Activated CD8-positive, alpha-beta memory T cell treated with anti-CD3 and anti-CD28 coated beads, Interleukin-2, amount 10 ng/mL, durations not matched to agents 7 days and 5 days (primary cell): ENCODE measurements at regions of chr6 and their contacts with region 1.

Region 1: GRCh38 chr6:4055420-4056041 is 23.4 kb downstream of the FAM217A start:
- DNase-seq: peak; percentile 46
- ATAC-seq: no peak
- H3K4me3 Mint-ChIP-seq: no peak overlapping the region
- H3K27ac Mint-ChIP-seq: peak overlapping the region; percentile 9
- H3K4me1 Mint-ChIP-seq: peaks cover 34% of the 10 kb centered on the region
- H3K27me3 Mint-ChIP-seq: no peaks in the 10 kb centered on the region

Region 2: GRCh38 chr6:3962957-3963303 is 92.6 kb before region 1 on chr6:
- CTCF ChIA-PET with region 1: no interaction called
- DNase-seq: no peak
- ATAC-seq: no peak
- H3K4me3 Mint-ChIP-seq: no peak overlapping the region
- H3K27ac Mint-ChIP-seq: no peak overlapping the region
- H3K4me1 Mint-ChIP-seq: peaks cover 5% of the 10 kb centered on the region
- H3K27me3 Mint-ChIP-seq: no peaks in the 10 kb centered on the region

Region 3: DNA sequence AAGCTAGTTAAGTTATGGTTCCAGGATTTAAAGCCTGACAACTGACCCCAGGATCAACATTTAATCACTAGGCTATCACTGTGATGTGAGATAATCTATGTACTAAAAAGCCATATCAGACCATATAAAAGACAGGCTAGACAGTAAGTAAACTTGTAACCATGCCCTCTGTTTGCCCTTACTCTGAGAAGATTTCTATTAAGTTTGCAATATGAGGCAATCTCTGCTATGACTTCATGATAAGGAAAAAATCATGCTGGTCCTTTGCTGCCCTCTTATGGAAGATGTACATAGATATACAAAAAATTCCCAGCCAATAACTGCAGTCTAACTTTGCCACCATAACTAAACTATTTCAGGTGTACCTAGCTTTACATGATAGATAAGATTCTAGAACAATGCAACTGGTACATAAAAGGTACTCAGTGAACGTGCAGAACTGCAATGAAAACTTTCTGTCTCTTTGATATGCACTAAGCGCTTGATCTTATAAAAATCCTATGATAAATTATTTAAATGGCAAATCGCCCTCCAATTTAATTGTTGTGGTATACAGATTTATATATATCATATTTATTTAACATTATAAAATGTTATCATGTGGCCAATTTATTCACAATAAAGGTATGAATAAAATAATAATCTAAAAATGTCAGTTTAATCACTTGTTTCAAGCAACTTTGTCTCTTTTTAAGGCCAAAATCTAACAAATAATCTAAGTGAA is 47.0 kb before region 1 on chr6:
- CTCF ChIA-PET with region 1: no interaction called
- DNase-seq: no peak
- ATAC-seq: peak; percentile 43
- H3K4me3 Mint-ChIP-seq: no peak overlapping the region
- H3K27ac Mint-ChIP-seq: no peak overlapping the region
- H3K4me1 Mint-ChIP-seq: peaks cover 43% of the 10 kb centered on the region
- H3K27me3 Mint-ChIP-seq: no peaks in the 10 kb centered on the region

Region 4: DNA sequence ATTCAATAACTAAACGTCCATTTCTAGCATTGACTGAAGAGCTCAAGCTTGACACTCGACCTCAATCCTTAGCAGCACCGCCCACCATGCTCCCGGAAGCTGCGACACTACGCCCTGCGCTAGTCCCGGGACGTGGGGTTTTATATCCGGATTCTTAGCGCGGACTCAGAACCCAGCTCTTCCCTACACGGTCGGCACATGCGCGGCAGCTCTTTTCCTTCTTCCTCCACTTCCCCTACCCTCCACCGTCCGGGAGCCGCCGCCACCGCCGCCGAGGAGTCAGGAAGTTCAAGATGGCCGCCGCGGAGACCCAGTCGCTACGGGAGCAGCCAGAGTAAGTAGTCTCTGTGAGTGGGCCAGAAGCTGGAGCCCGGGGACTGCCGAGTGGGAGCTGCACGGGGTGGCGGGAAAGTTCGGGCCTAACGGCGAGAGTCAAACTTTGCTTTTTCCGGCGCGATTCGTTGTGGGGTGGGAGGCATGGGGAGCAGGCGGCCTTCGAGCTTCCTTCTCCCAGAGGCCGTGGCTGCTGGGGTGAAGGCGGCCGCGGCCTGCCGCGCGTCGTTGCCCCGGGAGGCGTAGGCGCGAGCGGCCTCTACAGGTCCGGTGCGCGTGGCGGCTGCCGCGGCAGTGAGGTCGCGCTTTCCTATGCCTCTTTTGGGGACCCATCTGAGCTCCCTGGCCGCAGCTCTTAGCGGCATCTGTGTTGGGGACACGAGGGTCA is 34.2 kb before region 1 on chr6:
- CTCF ChIA-PET with region 1: interaction called, 27 read pairs
- DNase-seq: peak; percentile 94
- ATAC-seq: peak; percentile 71
- H3K4me3 Mint-ChIP-seq: peak overlapping the region; percentile 85
- H3K27ac Mint-ChIP-seq: peak overlapping the region; percentile 97
- H3K4me1 Mint-ChIP-seq: peaks cover 56% of the 10 kb centered on the region
- H3K27me3 Mint-ChIP-seq: no peaks in the 10 kb centered on the region

Region 5: GRCh38 chr6:4135665-4136353 is 80.3 kb after region 1 on chr6:
- CTCF ChIA-PET with region 1: interaction called, 12 read pairs
- DNase-seq: peak; percentile 97
- ATAC-seq: peak; percentile 90
- H3K4me3 Mint-ChIP-seq: peak overlapping the region; percentile 80
- H3K27ac Mint-ChIP-seq: peak overlapping the region; percentile 84
- H3K4me1 Mint-ChIP-seq: peaks cover 38% of the 10 kb centered on the region
- H3K27me3 Mint-ChIP-seq: no peaks in the 10 kb centered on the region

Region 6: DNA sequence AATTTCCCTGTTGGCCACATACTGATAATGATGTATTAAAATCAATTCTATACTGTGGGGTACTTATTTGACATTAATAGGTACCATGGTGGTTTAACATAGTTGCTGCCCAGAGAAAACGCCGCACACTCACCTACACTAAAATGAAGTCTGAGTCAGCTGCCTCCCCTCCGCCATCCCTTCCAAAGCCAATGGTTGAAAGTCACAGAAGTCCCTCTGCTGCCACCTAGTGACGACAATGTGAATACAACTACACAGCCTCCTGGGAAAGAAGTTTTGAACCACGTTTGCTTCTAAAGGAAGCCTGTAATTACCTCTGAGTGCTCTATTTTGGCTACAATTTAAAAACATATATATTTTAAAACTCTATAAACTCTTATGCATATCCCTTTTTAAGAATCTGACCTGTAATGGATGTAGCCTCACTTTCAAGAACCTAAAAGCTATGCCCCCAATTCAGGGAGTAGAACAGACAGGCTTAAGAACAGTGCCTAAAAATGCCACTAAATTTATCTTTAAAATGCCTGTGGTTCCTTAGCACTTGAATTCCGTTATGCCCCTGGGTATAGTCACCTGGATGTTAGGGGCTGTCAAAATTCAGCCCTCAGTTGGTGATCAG is 100.4 kb after region 1 on chr6:
- CTCF ChIA-PET with region 1: interaction called, 41 read pairs
- DNase-seq: peak; percentile 89
- ATAC-seq: peak; percentile 97
- H3K4me3 Mint-ChIP-seq: no peak overlapping the region
- H3K27ac Mint-ChIP-seq: peak overlapping the region; percentile 7
- H3K4me1 Mint-ChIP-seq: peaks cover 5% of the 10 kb centered on the region
- H3K27me3 Mint-ChIP-seq: peaks cover 11% of the 10 kb centered on the region